Right cardiac atrium (tissue), 5 donors: ENCODE measurements at regions of chr4 and their contacts with region 1.

Region 1: GRCh38 chr4:41360214-41360920 is 103.6 kb downstream of the UCHL1 start:
- DNase-seq: peak; percentile 81 to 94 (median 93)
- ATAC-seq: peak; percentile 92 to 93
- H3K4me3 ChIP-seq: peak overlapping the region; percentile 83
- H3K27ac ChIP-seq: peak overlapping the region; percentile 69
- H3K4me1 ChIP-seq: peaks cover 4% of the 10 kb centered on the region
- H3K27me3 ChIP-seq: no peaks in the 10 kb centered on the region

Region 2: DNA sequence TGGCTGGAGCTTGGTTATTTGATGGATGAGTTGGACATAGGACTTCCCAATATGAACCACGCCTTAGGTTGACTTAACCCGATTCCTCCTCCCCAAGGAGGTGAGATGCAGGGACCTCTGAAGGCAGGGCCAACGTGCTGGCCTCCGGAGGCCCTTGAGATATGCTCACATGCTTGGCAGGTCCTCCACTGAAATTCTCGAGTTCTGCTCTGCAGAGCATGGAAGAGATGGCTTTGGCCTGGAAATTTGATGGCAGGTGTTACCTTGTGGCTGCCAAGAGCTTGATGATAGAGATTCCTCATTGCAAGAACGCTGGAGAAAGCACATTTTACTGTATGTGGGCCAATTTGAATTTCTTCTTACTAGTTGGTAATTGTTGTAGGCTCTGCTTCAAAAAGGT is 60.2 kb after region 1 on chr4:
- intact Hi-C with region 1: loop called in 1 of 4 experiments (anchors 5 kb)
- DNase-seq: no peak
- ATAC-seq: no peak
- H3K4me3 ChIP-seq: no peak overlapping the region
- H3K27ac ChIP-seq: no peak overlapping the region
- H3K4me1 ChIP-seq: peaks cover 9% of the 10 kb centered on the region
- H3K27me3 ChIP-seq: no peaks in the 10 kb centered on the region

Region 3: GRCh38 chr4:41432881-41433280 is 72.5 kb after region 1 on chr4:
- intact Hi-C with region 1: loop called in 2 of 4 experiments (anchors 5 to 10 kb)
- DNase-seq: no peak
- ATAC-seq: no peak
- H3K4me3 ChIP-seq: no peak overlapping the region
- H3K27ac ChIP-seq: no peak overlapping the region
- H3K4me1 ChIP-seq: peaks cover 21% of the 10 kb centered on the region
- H3K27me3 ChIP-seq: no peaks in the 10 kb centered on the region

Region 4: DNA sequence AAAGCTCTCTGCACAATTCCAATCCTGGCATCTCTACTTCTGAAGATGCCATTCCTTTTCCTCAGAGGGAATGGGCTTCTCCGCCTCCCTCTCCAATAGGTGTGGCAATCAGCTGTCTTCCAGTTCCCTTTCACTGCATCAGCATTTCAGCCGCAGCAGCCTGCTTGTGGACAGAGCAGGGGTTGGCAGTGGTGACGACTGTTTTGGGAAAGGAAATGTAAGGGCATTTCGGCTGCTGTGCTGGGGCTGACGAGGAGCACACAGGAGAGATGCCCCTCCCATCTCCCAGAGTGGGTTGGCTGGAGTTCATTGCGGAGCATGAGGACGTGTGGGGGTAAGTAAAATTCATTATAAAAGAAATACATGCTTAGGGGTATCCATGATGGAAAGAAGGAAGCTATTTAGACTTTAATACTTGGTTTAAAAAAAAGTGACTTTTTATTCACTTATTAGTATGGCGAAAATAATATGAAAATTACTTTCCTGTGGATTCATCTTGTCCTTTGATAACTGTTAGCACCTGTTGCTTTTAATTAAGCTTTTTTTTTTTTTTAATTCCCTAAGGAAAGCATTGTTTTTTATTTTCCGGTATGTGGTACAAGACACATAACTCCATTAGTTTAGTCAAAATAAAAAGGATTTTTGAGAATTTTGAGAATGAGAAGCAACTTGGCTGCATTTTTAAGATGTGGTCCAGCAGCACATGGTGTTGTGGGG is 177.8 kb after region 1 on chr4 and contains the start of gene LIMCH1:
- intact Hi-C with region 1: loop called in 2 of 4 experiments (anchors 5 to 10 kb)
- DNase-seq: peak; percentile 79 to 90 (median 85)
- ATAC-seq: peak; percentile 85 to 88
- H3K4me3 ChIP-seq: peak within 1 kb of the TSS; percentile 63
- H3K27ac ChIP-seq: peak within 1 kb of the TSS; percentile 87
- H3K4me1 ChIP-seq: peaks cover 24% of the 10 kb centered on the region
- H3K27me3 ChIP-seq: no peaks in the 10 kb centered on the region
- total RNA-seq, gene LIMCH1: 157 to 248 (median 198) TPM